GM18951 (cell line): ENCODE measurements at regions of chr13 and their contacts with region 1.

Region 1: DNA sequence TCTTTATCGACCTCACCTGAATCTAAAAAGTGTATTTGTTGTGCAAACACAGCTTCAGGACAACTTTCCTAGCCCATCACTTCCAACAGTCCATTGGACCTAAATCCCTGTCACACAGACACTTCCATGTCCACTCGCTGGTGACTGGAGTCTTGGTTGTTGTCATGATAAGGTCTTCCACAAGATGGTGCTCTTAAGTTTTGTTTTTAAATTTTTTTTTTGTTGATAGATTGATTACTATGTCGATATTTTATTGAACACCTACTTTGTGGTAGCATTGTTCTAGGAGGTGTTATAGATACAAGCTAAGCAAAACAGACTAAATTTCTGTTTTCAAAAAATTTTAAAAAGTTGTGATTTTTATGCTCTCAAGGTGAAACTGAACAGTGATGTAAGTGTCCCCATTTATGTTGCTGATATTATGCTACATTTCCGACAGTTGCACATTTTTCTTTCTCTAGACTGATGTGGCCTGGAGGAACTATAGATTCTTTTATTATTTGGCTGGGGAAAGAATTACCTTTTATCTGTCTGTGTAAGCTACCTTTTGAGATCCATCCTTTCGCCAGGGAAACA is 8.1 kb upstream of the ERICH6B start:
- POLR2A ChIP-seq: no peak

Region 2: DNA sequence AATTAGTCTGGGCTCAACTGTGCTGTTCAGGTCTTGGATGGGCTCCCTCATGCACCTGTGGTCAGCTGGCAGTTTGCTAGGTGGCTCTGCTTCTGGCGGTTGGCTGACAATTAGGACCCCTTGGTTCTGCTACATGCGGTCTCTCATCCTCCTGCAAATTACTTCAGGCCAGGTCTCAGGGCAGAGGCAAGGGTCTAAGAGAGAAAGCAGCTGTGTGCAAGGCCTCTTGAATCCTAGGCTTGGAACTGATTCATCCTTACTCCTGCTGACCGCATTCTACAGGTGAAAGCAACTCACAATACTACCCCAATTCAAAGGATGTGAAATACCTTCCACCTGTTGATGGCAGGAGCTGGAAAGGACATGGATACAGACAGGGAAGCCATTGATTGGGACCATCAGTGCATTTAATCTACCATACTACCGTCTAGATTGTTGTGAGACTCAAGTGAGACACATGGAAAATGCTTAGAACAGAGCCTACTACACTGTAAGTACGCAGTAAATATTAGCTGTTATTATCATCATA is 97.7 kb after region 1 on chr13:
- in situ Hi-C with region 1: loop called (anchors 5 kb)
- POLR2A ChIP-seq: no peak